Activated CD8-positive, alpha-beta T cell treated with anti-CD3 and anti-CD28 coated beads for 36 hours (primary cell): ENCODE measurements at regions of chr5 and their contacts with region 1.

Region 1: DNA sequence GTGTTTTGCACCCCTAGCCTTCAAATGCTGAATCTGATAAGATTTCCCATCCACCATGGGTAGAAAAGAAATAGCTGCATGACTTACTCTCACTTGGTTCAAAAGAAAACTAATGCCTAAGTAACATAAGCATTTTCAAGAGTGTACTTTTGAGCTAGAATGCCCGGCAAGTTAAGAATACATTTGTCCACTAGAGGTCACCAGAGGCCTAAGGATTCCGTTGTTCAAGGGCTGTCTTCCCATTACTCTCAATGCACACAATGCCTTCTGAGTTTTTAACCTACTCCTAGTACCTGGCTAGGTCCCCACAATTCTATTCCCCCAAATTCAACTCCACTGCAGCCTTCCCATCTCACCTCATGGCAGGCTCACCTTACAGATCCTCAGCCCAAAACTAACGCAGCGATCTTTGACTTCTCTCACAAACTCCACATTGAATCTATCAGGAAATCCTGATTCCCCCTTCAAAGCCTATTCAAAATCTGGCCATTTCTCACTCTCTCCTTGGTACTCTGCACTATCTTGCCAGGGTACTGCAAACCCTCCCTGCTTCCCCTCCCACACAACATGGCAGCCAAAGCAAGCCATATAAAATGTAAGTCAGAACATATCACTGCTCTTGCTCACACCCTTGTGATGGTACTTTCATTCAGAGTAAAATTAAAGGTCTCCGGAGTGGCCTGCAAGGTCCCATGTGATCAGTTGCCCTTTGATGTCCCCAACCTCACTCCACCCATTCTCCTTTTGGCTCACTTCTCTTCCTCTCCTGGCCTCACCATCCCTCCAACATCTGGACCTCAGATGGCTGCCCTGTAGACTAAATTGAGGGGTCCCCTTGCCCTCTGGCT is 13.4 kb downstream of the OXCT1 start:
- DNase-seq: peak; percentile 58
- ATAC-seq: peak; percentile 76
- H3K4me3 Mint-ChIP-seq: no peak overlapping the region
- H3K27ac Mint-ChIP-seq: no peak overlapping the region
- H3K4me1 Mint-ChIP-seq: peaks cover 25% of the 10 kb centered on the region
- H3K27me3 Mint-ChIP-seq: no peaks in the 10 kb centered on the region
- CTCF ChIP-seq: peak; percentile 75

Region 2: GRCh38 chr5:41837793-41838192 is 19.1 kb before region 1 on chr5:
- CTCF ChIA-PET with region 1: interaction called, 50 read pairs
- POLR2A ChIA-PET with region 1: no interaction called
- intact Hi-C with region 1: no loop called
- DNase-seq: no peak
- ATAC-seq: no peak
- H3K4me3 Mint-ChIP-seq: no peak overlapping the region
- H3K27ac Mint-ChIP-seq: no peak overlapping the region
- H3K4me1 Mint-ChIP-seq: peaks cover 39% of the 10 kb centered on the region
- H3K27me3 Mint-ChIP-seq: no peaks in the 10 kb centered on the region
- CTCF ChIP-seq: no peak

Region 3: GRCh38 chr5:41843456-41844370 is 13.2 kb before region 1 on chr5:
- CTCF ChIA-PET with region 1: interaction called, 50 read pairs
- POLR2A ChIA-PET with region 1: no interaction called
- intact Hi-C with region 1: no loop called
- DNase-seq: peak; percentile 33
- ATAC-seq: peak; percentile 67
- H3K4me3 Mint-ChIP-seq: no peak overlapping the region
- H3K27ac Mint-ChIP-seq: no peak overlapping the region
- H3K4me1 Mint-ChIP-seq: peaks cover 20% of the 10 kb centered on the region
- H3K27me3 Mint-ChIP-seq: no peaks in the 10 kb centered on the region
- CTCF ChIP-seq: peak; percentile 89

Region 4: GRCh38 chr5:41924872-41925554 is 68.1 kb after region 1 on chr5 and contains the start of gene FBXO4:
- CTCF ChIA-PET with region 1: interaction called, 9 read pairs
- POLR2A ChIA-PET with region 1: interaction called, 6 read pairs
- intact Hi-C with region 1: loop called (anchors 5 kb)
- DNase-seq: peak; percentile 90
- ATAC-seq: peak; percentile 98
- H3K4me3 Mint-ChIP-seq: peak within 1 kb of the TSS; percentile 72
- H3K27ac Mint-ChIP-seq: peak within 1 kb of the TSS; percentile 93
- H3K4me1 Mint-ChIP-seq: peaks cover 11% of the 10 kb centered on the region
- H3K27me3 Mint-ChIP-seq: no peaks in the 10 kb centered on the region
- CTCF ChIP-seq: peak; percentile 46
- total RNA-seq, gene FBXO4: 18.5 to 21.0 TPM